ENCODE measurements at regions of chr15 and their contacts with region 1.

Region 1: DNA sequence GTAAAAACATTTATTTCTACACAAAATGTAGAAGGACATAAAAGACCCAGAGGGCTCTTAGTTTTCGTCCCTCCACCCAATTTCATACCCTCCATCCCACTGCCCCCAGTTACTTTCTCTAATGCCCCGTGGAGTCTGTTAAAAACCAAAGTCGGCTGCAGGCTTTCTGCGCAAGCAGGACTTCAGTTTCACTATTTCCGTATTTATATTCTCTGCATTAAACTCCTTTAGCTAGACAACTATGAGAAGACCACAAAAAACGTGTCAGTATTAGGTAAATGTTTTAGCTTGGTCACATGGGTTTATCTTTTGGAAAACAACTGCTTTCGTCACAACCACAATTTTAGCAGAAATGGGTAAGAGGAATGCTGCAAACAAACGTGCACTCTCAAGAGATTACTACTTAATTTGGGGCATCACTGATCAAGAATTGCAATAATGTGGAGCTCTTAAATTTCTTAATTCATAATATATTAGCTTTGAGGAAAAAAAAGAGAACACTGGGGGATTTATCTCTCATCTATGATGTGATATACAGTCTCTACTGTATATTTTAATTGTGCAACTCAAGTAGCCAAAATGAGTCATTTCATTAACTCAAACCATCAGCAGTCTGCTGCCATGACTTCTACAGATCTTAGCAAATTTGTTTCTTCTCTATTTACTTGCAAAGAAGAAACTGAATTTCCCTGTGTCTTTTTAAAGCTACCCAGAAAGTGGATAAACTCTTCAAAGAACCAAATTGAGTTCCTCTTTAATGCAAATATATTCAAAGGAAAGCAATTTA is 740 bp upstream of the NSMCE3 start:
- DNase-seq: no peak
- H3K4me3 ChIP-seq: peak overlapping the region; percentile 76
- H3K27ac ChIP-seq: peak overlapping the region; percentile 89
- H3K27me3 ChIP-seq: no peaks in the 10 kb centered on the region
- CTCF ChIP-seq: no peak

Region 2: GRCh38 chr15:29208352-29208751 is 62.0 kb before region 1 on chr15:
- CTCF ChIA-PET with region 1: no interaction called
- POLR2A ChIA-PET with region 1: no interaction called
- DNase-seq: no peak
- H3K4me3 ChIP-seq: no peak overlapping the region
- H3K27ac ChIP-seq: no peak overlapping the region
- H3K27me3 ChIP-seq: peaks cover 3% of the 10 kb centered on the region
- CTCF ChIP-seq: no peak

Region 3: DNA sequence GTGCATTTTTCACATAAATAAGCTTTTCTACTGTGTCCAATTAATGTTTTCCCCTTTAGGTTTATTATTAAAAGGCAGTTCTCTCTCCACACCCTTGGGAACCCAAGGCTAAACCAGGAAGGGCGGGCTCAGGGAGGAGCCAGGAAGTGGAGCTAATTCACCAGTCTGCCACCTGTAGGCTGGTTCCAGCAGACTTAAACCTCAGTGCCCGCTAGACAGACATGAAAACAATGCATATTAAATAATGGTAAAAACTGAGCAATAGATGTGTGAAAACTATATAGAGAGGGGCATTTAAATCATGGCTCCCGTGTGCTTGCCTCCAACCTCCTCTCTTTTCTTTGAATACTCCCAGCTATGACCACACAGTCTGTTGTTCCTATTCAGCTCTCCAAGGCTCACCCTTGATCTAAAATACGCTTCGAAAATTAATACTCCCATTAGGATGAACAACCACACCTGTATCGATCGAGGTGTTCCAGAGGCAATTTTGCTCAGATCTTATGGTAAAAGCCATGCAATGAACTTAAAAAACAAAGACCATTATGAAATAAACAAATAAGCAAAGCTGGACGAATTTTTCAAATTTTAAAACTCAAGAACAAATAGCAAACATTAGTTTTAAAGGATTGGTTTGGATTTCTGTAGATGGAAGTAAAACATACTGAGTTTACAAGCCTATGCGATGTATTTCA is 298.6 kb after region 1 on chr15:
- CTCF ChIA-PET with region 1: no interaction called
- POLR2A ChIA-PET with region 1: interaction called, 10 read pairs
- DNase-seq: no peak
- H3K4me3 ChIP-seq: no peak overlapping the region
- H3K27ac ChIP-seq: no peak overlapping the region
- H3K27me3 ChIP-seq: peaks cover 45% of the 10 kb centered on the region
- CTCF ChIP-seq: no peak